Dendritic cell treated with granulocyte-macrophage colony-stimulating factor and Interleukin-4, amounts not matched to agents 40 ng/mL and 50 ng/mL, for 4 days (primary cell): ENCODE measurements at regions of chr13 and their contacts with region 1.

Region 1: DNA sequence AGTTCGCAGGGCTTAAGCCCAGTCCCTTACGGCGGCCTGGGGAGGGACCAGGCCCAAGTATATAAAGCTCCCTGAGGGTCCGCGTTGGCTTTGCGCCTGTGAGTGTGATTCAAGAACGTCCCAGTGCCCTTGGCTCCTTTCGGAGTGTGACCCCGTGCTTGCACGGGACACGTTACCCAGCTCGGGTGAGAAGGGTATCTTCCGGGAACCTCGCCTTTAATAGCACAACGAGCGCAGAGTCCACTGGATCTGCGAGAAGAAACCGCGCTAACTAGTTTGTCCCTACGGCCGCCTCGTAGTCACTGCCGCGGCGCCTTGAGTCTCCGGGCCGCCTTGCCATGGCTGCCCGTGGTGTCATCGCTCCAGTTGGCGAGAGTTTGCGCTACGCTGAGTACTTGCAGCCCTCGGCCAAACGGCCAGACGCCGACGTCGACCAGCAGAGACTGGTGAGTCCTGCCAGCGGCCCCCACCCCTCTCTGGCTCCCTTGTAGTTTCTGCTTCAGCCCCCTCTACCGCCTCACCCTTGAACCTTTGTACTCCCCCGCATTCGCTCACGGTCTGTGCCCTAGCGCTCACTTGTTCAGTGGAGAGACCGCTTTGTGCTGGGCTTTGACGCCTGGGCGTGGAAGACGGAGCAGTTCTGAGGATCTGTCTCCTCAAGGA is at the start of gene DNAJC15:
- H3K4me3 Mint-ChIP-seq: peak within 1 kb of the TSS; percentile 96
- H3K27ac Mint-ChIP-seq: peak within 1 kb of the TSS; percentile 98
- H3K4me1 Mint-ChIP-seq: peaks cover 37% of the 10 kb centered on the region
- H3K27me3 Mint-ChIP-seq: no peaks in the 10 kb centered on the region

Region 2: DNA sequence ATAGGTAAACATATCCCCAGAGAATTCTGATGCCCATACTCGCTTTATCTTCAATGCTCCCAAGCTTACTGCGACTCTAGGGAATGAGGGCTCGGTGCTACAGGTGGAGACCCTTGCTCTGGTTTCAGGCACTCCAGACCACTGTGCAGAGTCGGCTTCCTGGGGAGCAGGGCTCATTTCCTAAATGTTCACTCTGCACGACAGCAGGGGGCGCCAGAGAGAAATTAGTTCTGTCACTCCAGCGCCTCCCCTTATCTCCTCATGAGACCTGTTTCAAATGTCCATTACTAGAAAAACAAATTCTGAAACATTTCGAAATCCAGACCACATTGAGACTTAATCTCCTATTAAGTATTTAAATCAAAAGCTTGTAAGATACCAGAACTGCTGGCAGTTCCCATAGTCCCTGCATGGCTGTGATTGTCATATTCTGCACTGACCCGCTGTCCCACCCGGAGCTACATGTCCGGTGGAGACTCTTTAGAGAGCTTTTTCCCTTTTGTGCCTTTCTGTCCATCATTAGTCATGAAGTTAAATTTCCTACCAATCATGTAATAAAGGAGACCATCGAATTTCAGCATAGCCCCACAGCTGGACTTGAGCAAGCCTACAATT is 53.8 kb before region 1 on chr13:
- intact Hi-C with region 1: loop called (anchors 2 kb)
- H3K4me3 Mint-ChIP-seq: no peak overlapping the region
- H3K27ac Mint-ChIP-seq: no peak overlapping the region
- H3K4me1 Mint-ChIP-seq: peaks cover 7% of the 10 kb centered on the region
- H3K27me3 Mint-ChIP-seq: no peaks in the 10 kb centered on the region

Region 3: DNA sequence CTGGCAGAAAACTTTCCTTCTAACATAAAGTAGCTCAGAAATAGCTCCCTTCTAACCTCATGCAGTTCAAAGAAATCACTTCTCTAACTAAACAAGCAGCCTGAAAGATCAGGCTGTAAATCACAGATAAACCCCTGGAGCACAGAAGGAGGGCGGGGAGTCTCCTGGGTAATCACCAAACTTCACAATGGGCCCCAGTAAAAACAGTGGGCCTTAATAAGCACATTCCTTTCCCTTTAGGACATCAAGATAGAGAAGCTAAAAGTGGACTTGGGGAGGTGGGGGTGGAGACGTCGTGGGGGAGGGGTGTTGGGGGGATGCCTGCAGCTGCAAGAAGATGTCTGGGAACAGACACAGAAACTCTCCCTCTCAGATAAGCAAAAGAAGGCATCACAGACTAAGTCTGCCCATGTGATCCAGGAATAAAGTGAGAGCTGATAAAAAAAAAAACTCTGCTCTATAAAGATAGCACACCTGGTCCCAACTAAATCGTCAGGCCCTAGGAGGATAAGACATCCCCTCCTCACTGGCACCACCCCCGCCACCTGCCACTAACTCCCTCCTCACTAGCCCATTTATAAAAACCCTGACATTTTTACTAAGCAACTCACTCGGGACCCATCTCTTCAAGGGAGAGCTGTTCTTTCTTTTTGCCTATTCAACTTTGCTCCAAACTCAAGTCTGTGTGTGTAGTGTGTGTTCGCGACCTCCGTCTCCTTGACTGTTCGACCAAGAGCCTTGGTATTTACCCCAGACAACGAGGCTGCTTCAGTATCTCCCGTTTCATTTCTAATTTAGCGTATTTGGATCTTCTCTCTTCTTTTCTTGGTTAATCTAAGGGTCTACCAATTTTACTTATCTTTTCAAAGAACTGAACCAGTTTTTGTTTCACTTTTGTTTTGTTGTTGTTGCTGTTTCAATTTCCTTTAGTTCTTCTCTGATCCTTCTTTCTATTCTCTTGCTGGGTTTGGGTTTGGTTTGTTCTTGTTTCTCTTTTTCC is 31.7 kb after region 1 on chr13:
- intact Hi-C with region 1: loop called (anchors 2 kb)
- H3K4me3 Mint-ChIP-seq: no peak overlapping the region
- H3K27ac Mint-ChIP-seq: no peak overlapping the region
- H3K4me1 Mint-ChIP-seq: peaks cover 40% of the 10 kb centered on the region
- H3K27me3 Mint-ChIP-seq: no peaks in the 10 kb centered on the region